ENCODE measurements at regions of chr9 and their contacts with region 1.

Region 1: DNA sequence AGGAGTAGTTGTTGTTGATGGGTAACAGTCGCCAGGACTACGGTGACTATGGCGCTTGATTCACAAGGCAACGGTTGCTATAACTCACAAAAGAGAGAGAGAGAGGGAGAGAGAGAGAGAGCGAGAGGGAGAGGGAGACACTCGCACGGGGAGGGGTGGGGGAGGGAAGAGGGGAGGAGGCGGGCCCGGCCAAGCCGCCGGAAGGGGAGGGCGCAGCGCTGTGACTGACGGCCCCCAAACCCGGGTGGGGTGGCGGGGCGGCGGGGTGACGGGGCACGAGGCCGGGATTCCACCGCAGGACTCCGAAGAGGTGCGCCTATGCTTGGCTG is at the start of gene RFX3:
- DNase-seq: peak; percentile 96
- H3K4me3 Mint-ChIP-seq: peak within 1 kb of the TSS; percentile 89
- H3K27ac Mint-ChIP-seq: peak within 1 kb of the TSS; percentile 100
- H3K4me1 Mint-ChIP-seq: peaks cover 47% of the 10 kb centered on the region
- H3K27me3 Mint-ChIP-seq: peaks cover 2% of the 10 kb centered on the region
- total RNA-seq, gene RFX3: 11.6 and 12.8 TPM in 2 replicates

Region 2: DNA sequence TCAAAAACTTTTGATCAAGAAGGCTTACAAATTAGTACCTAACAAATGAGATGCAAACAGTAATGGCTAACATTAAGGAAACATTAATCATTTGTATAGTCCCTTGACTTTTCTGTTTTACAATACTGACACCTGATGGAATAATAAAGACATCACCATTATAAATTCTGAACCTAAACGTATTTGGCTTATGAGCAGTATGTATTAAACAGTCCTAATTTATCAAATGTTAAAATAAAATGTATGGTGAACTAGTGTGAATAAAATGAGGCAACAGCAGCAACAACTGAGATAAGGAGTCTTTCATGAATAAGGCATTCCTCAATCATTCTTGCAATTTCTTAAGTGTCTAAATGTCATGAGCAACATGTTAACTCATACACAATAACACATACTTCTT is 687.9 kb before region 1 on chr9:
- intact Hi-C with region 1: loop called (anchors 5 kb)
- DNase-seq: no peak
- H3K4me3 Mint-ChIP-seq: no peak overlapping the region
- H3K27ac Mint-ChIP-seq: no peak overlapping the region
- H3K4me1 Mint-ChIP-seq: peaks cover 32% of the 10 kb centered on the region
- H3K27me3 Mint-ChIP-seq: no peaks in the 10 kb centered on the region

Region 3: GRCh38 chr9:3385871-3386270 is 139.9 kb before region 1 on chr9:
- intact Hi-C with region 1: loop called (anchors 1 kb)
- DNase-seq: peak; percentile 77
- H3K4me3 Mint-ChIP-seq: peak overlapping the region; percentile 19
- H3K27ac Mint-ChIP-seq: peak overlapping the region; percentile 70
- H3K4me1 Mint-ChIP-seq: peaks cover 17% of the 10 kb centered on the region
- H3K27me3 Mint-ChIP-seq: no peaks in the 10 kb centered on the region

Region 4: DNA sequence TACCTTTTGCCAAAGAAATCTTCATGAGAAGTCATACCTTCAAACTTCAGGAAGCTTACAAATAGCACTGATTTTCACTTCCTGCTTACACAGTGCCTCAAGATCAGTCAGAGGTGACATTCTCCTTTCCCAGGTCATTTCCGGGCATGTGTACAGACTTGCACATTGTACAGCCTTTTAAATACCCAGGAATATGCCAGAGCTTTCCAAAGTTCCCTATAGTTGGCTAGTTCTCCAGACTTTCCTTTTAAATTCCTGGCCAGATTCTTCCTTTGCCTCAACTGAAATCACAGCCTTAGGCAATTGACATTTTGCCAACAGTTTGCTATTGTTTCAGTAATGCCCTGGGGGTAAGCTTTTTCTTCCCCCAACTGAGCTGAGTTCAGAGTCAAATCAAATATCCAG is 47.2 kb before region 1 on chr9:
- intact Hi-C with region 1: loop called (anchors 1 kb)
- DNase-seq: peak; percentile 60
- H3K4me3 Mint-ChIP-seq: peak overlapping the region; percentile 78
- H3K27ac Mint-ChIP-seq: peak overlapping the region; percentile 67
- H3K4me1 Mint-ChIP-seq: peaks cover 51% of the 10 kb centered on the region
- H3K27me3 Mint-ChIP-seq: no peaks in the 10 kb centered on the region

Region 5: DNA sequence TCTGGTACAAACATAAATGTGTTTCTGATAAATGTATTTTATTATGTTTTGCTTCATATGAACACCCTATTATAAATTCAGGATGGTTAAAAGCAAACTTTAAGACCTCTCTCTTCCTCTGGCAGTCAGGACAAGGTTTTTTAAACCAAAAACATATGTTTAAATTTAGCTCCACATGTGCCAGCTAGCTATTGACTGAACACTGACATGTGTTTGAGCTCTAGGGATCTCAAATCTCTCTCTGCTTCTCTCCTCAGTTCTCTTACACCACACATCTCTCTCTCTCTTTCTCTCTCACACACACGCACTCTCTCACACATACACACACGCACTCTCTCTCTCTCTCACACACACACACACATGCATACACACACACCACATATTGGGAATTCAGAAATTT is 150.1 kb after region 1 on chr9:
- intact Hi-C with region 1: no loop called
- DNase-seq: no peak
- H3K4me3 Mint-ChIP-seq: no peak overlapping the region
- H3K27ac Mint-ChIP-seq: no peak overlapping the region
- H3K4me1 Mint-ChIP-seq: no peaks in the 10 kb centered on the region
- H3K27me3 Mint-ChIP-seq: no peaks in the 10 kb centered on the region

Region 6: DNA sequence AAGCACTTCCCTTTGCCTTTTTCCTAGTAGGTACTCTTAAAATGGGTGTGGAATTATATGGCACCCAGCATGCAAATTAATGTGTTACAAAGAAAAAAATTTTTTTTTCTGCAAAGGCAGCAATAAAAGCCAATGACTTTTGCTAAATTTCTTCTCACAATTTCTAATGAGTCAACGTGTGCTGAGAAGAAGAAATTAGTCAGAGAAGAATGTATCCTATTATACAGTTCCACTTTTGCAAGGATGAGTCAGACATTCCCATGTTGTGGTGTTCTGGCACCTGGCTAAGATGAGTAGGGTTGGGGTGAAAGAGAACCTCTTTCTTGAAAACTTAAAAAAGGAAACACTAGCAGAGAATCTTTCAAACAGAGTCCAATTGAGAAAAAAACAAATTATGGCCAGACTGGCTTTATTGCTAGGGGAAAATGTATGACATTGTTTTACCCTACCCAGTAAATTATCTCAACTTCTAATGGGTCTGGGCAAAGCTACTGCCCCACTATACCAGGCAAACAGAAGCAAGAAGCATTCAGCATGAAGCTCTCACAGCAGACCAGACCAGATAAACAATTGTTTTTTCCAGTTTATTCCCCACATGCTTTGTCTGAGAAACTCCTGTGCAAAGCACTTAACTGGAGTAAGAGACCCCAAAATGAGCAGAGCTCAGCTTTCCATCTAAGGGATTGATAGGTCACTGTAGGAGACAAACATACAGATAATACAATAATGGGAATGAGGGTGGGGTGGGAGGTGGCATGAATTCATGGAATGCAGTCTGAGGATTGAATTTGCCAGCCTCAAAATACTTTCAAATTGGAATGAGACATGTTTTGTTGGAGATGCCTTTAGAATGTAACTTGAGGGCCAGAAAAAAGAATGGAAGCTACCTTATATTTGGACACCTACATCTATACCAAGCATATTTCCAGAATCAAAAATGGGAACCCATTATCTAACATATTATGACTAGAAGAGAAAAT is 220.8 kb after region 1 on chr9:
- intact Hi-C with region 1: loop called (anchors 2 kb)
- DNase-seq: no peak
- H3K4me3 Mint-ChIP-seq: no peak overlapping the region
- H3K27ac Mint-ChIP-seq: peak overlapping the region; percentile 54
- H3K4me1 Mint-ChIP-seq: peaks cover 15% of the 10 kb centered on the region
- H3K27me3 Mint-ChIP-seq: no peaks in the 10 kb centered on the region

Region 7: DNA sequence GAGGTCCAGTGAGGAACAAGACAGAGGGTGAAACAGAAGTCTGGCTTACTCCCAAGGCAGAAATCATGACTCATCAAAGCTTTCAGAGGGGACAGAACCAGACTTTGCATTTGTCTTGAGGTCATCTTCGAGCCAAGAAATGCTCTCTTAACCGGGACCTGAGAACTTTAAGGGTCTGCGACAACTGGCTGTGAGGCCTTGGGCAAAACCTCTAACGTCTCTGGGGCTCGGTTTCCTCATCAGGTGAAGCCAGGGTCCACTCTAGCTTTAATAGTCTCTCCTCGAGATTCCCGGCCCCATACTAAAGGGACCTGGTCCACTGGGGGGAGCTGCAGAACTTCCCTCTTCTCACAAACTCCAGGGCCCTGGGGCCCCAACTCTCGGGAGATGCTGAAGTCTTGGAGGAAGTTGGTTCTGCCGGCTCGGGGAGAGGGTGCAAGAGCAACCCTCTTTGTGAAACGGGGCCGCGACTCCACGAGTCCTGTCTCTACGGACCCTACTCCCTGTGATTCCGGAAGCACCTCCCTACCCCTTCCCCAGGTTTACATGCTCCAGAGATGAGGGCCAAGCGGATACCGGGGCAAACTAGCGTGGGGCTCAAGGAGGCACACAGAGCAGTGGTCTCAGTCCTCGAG is 771.5 kb after region 1 on chr9:
- intact Hi-C with region 1: loop called (anchors 2 kb)
- DNase-seq: peak; percentile 78
- H3K4me3 Mint-ChIP-seq: peak overlapping the region; percentile 99
- H3K27ac Mint-ChIP-seq: peak overlapping the region; percentile 91
- H3K4me1 Mint-ChIP-seq: peaks cover 29% of the 10 kb centered on the region
- H3K27me3 Mint-ChIP-seq: peaks cover 69% of the 10 kb centered on the region

Region 8: DNA sequence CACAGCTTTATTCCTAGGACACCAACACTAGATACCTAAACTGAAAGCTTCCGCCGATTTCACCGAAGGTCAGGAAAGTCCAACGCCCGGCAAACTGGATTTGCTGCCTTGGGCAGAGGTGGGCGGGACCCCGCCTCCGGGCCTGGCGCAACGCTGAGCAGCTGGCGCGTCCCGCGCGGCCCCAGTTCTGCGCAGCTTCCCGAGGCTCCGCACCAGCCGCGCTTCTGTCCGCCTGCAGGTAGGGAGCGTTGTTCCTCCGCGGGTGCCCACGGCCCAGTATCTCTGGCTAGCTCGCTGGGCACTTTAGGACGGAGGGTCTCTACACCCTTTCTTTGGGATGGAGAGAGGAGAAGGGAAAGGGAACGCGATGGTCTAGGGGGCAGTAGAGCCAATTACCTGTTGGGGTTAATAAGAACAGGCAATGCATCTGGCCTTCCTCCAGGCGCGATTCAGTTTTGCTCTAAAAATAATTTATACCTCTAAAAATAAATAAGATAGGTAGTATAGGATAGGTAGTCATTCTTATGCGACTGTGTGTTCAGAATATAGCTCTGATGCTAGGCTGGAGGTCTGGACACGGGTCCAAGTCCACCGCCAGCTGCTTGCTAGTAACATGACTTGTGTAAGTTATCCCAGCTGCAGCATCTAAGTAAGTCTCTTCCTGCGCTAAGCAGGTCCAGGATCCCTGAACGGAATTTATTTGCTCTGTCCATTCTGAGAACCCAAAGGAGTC is 1924.7 kb after region 1 on chr9 and contains the start of gene CD274:
- intact Hi-C with region 1: loop called (anchors 5 kb)
- DNase-seq: peak; percentile 95
- H3K4me3 Mint-ChIP-seq: peak within 1 kb of the TSS; percentile 90
- H3K27ac Mint-ChIP-seq: peak within 1 kb of the TSS; percentile 90
- H3K4me1 Mint-ChIP-seq: peaks cover 56% of the 10 kb centered on the region
- H3K27me3 Mint-ChIP-seq: no peaks in the 10 kb centered on the region
- total RNA-seq, gene CD274: 52.1 and 57.6 TPM in 2 replicates